ENCODE measurements at regions of chr7 and their contacts with region 1.

Region 1: GRCh38 chr7:25259587-25260243 is 31.4 kb upstream of the NPVF start:
- DNase-seq: peak; percentile 61
- ATAC-seq: peak; percentile 78

Region 2: GRCh38 chr7:25389489-25390106 is 129.9 kb after region 1 on chr7:
- intact Hi-C with region 1: loop called (anchors 5 kb)
- DNase-seq: no peak
- ATAC-seq: peak; percentile 53

Region 3: GRCh38 chr7:25851332-25852210 is 591.9 kb after region 1 on chr7:
- intact Hi-C with region 1: loop called (anchors 5 kb)
- DNase-seq: peak; percentile 94
- ATAC-seq: peak; percentile 70

Region 4: DNA sequence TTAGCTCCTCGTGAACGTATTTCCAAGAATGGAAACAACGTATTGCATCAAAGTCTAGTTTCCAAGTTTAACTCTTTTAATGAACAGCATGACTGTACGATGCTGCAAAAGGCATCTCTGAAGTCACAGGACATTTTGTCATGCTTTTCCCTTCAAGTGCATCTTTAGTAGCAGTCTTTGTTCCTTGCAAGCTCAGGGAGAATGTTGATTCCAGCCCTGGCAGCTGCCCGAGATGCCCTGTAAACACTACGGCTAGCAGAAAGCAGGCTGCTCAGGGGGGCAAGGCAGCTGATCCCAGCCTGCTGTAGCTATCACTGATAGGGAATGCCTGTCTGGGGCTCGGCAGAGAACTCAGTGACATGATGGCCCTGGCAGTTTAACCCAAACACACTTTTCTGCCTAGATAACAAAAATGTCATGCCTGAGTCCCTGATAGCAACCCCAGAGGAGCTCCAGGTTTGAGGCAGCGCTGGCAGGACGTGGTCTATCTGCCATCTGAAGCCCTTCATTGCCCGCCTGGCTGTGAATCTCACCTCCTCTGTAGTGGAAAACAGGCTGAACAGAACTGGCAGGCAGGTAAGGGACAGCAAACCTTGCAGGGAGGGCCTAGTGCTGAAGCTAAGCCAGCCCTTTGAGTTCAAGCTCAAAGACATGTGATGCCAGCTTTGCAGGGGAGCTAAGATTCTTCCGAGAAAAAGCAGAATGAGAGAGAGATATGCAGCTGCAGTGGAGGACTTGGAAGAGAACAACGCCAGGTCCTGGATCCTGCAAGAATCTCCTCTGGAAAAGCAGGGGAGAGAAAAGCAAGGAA is 1296.6 kb after region 1 on chr7:
- intact Hi-C with region 1: no loop called
- DNase-seq: no peak
- ATAC-seq: no peak